Activated naive CD4-positive, alpha-beta T cell treated with anti-CD3 and anti-CD28 coated beads for 36 hours (primary cell): ENCODE measurements at regions of chr12 and their contacts with region 1.

Region 1: DNA sequence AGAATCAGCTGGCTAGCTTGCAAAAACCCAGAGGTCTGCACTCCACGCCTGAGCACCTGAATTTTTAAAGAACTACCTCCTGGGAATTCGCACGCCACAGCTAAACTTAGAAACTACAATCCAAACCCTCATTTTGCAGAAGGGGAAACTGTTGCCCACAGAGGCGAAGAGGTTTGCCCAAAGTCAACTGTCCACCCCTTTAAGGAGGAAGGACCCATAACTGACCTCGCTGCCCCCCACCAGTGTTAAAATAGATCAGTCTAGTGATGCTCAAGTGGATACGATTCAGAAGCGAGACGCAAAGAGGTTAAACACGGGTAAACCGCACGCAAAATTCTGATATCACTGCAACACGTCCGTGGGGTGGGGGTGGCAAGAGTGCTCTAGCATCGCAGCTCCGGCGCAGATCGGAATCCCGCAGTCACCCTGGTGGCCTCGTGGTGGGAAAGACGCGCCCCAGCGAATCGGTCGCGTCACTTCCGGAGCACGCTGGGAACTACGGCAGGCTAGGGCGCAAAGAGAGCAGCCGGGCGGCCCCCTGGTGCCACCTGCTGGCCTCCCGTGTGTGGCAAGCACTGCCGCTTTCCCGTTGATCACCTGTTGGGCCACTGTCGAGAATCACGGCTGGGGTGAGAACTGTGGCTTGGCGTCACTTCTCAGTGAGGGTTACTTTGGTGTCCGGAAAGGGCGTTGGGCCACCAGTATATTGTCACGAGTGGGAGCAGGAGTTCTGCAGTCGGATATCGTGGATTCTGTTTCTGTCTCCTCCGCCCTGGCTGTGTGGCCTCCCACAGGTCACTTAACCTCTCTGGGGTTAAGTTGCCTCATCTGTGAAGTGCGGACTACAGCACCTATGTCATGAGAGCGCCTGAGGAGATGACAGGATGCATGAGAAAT is at the start of gene ALKBH2:
- DNase-seq: peak; percentile 96
- H3K4me3 Mint-ChIP-seq: peak within 1 kb of the TSS; percentile 85
- H3K27ac Mint-ChIP-seq: peak within 1 kb of the TSS; percentile 81
- H3K4me1 Mint-ChIP-seq: peaks cover 44% of the 10 kb centered on the region
- H3K27me3 Mint-ChIP-seq: no peaks in the 10 kb centered on the region
- total RNA-seq, gene ALKBH2: 31.1 to 32.7 TPM

Region 2: GRCh38 chr12:108618079-108618952 is 475.0 kb before region 1 on chr12:
- CTCF ChIA-PET with region 1: no interaction called
- intact Hi-C with region 1: loop called (anchors 1 kb)
- DNase-seq: peak; percentile 81
- H3K4me3 Mint-ChIP-seq: no peak overlapping the region
- H3K27ac Mint-ChIP-seq: peak overlapping the region; percentile 20
- H3K4me1 Mint-ChIP-seq: peaks cover 36% of the 10 kb centered on the region
- H3K27me3 Mint-ChIP-seq: no peaks in the 10 kb centered on the region

Region 3: GRCh38 chr12:108731105-108731865 is 362.0 kb before region 1 on chr12 and contains the start of gene CORO1C:
- CTCF ChIA-PET with region 1: no interaction called
- intact Hi-C with region 1: loop called (anchors 1 kb)
- DNase-seq: peak; percentile 96
- H3K4me3 Mint-ChIP-seq: peak within 1 kb of the TSS; percentile 89
- H3K27ac Mint-ChIP-seq: peak within 1 kb of the TSS; percentile 87
- H3K4me1 Mint-ChIP-seq: peaks cover 29% of the 10 kb centered on the region
- H3K27me3 Mint-ChIP-seq: no peaks in the 10 kb centered on the region
- total RNA-seq, gene CORO1C: 36.4 to 43.7 TPM

Region 4: GRCh38 chr12:108856428-108857157 is 236.7 kb before region 1 on chr12:
- CTCF ChIA-PET with region 1: interaction called, 5 read pairs
- intact Hi-C with region 1: loop called (anchors 1 kb)
- DNase-seq: peak; percentile 74
- H3K4me3 Mint-ChIP-seq: peak overlapping the region; percentile 92
- H3K27ac Mint-ChIP-seq: peak overlapping the region; percentile 75
- H3K4me1 Mint-ChIP-seq: peaks cover 40% of the 10 kb centered on the region
- H3K27me3 Mint-ChIP-seq: no peaks in the 10 kb centered on the region

Region 5: DNA sequence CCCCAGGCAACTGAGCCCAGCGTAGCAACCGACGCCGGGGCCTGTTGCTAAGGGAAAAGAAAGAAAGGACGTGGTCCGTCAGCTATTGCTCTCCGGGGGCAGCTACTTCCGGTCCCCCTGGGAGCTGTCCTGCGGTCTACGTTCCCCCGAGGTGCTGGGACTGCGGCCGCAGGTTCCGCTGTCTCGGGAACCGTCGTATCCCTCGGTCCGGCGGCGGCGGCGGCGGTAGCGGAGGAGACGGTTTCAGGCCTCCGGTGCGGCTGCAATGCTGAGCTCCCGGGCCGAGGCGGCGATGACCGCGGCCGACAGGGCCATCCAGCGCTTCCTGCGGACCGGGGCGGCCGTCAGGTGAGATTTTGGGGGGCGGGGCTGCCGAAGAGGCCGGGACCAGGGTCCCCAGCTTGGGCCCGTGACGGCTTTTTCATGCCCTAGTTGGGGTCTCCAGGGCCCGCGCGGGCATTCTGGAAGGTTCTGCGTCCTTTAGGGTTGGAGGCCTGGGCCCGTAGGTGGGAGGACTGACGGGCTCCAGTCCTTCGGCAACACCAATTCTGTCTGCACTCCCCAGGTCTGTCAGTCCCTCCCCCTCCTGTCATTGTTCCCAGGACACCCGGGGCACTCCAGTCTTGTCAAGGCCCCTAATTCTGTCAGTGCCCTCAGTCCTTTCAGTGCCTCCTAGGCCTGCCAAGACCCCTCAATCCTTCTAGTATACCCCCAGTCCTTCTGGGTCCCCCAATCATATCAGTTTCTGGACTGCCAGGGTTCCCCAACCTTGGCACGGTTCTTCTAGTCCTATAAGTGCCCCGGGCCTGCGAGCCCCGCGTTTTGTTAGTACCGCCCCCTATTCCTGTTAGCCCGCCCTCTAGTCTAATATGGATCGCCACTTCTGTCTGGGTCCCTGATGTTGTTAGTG is 40.6 kb before region 1 on chr12 and contains the start of gene USP30:
- CTCF ChIA-PET with region 1: interaction called, 27 read pairs
- intact Hi-C with region 1: loop called (anchors 1 kb)
- DNase-seq: peak; percentile 87
- H3K4me3 Mint-ChIP-seq: peak within 1 kb of the TSS; percentile 84
- H3K27ac Mint-ChIP-seq: peak within 1 kb of the TSS; percentile 96
- H3K4me1 Mint-ChIP-seq: peaks cover 8% of the 10 kb centered on the region
- H3K27me3 Mint-ChIP-seq: no peaks in the 10 kb centered on the region
- total RNA-seq, gene USP30: 11.0 to 11.5 TPM

Region 6: GRCh38 chr12:109126784-109127183 is 33.5 kb after region 1 on chr12:
- CTCF ChIA-PET with region 1: no interaction called
- intact Hi-C with region 1: no loop called
- DNase-seq: no peak
- H3K4me3 Mint-ChIP-seq: no peak overlapping the region
- H3K27ac Mint-ChIP-seq: no peak overlapping the region
- H3K4me1 Mint-ChIP-seq: no peaks in the 10 kb centered on the region
- H3K27me3 Mint-ChIP-seq: no peaks in the 10 kb centered on the region

Region 7: DNA sequence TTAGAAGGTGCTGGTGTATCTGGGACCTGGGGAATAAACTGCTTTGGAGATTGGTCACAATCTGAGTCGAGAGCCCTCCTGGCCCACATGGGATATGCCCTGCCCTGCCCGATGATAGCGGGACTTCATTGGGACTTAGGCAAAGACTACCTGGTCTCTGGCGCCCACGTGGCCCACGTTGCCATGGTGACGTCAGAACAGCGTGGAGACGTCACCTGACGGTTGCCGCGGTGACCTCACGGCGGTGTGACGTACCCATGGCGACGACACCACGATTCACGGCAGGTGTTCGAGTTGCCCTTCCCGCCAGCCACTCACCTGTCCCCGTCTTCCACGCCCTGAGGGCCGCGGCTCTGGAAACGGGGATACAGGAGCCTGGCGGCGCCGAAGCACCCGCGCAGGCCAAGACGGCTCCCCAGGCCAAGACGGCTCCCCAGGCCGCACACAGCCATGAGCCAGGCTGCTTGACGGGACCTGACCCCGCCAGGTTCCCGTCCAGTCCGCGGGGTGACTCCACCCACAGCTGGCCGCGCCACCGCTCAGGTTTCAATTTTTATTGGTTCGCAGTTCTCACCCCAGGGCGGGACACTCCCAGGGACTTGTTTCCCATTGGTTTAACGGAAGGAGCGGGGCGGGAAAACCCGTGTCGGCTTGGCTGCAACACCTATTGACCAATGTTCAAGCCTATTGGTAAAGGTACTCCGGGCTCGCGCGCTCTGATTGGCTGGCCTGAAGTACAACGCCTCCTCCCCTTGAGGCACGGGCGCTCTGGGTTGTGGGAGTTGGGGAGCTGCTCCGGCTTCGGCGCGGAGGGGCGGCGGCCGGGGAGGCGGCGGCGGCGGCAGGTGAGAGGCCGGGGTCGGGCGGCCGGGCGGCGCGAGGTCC is 480.0 kb after region 1 on chr12 and contains the starts of genes MMAB and MVK:
- CTCF ChIA-PET with region 1: no interaction called
- intact Hi-C with region 1: loop called (anchors 1 kb)
- DNase-seq: peak; percentile 100
- H3K4me3 Mint-ChIP-seq: peak within 1 kb of the TSS; percentile 92
- H3K27ac Mint-ChIP-seq: peak within 1 kb of the TSS; percentile 90
- H3K4me1 Mint-ChIP-seq: peaks cover 23% of the 10 kb centered on the region
- H3K27me3 Mint-ChIP-seq: no peaks in the 10 kb centered on the region
- total RNA-seq, gene MMAB: 43.8 to 44.9 TPM
- total RNA-seq, gene MVK: 19.8 to 20.2 TPM